ENCODE measurements at regions of chr2 and their contacts with region 1.

Region 1: GRCh38 chr2:156341452-156342253 is 9.1 kb upstream of the NR4A2 start:
- DNase-seq: peak; percentile 90 to 98 (median 94)
- ATAC-seq: peak; percentile 83
- H3K4me3 ChIP-seq: peak overlapping the region; percentile 88
- H3K27ac ChIP-seq: peak overlapping the region; percentile 98
- H3K4me1 ChIP-seq: peaks cover 6 to 30% of the 10 kb centered on the region in 2 experiments; a peak in 4 of 5 replicates
- H3K27me3 ChIP-seq: no peaks in the 10 kb centered on the region; a peak in 1 of 5 replicates
- CTCF ChIP-seq: no peak
- EP300 ChIP-seq: no peak; the same call in none of the 2 replicates
- POLR2A ChIP-seq: peak; percentile 90
- RAD21 ChIP-seq: no peak

Region 2: GRCh38 chr2:155332016-155332415 is 1009.6 kb before region 1 on chr2:
- CTCF ChIA-PET with region 1: no interaction called
- POLR2A ChIA-PET with region 1: no interaction called
- in situ Hi-C with region 1: no loop called
- intact Hi-C with region 1: no loop called
- DNase-seq: no peak
- ATAC-seq: no peak
- H3K4me3 ChIP-seq: no peak overlapping the region
- H3K27ac ChIP-seq: no peak overlapping the region
- H3K4me1 ChIP-seq: no peaks in the 10 kb centered on the region
- H3K27me3 ChIP-seq: no peaks in the 10 kb centered on the region
- CTCF ChIP-seq: no peak
- EP300 ChIP-seq: no peak
- POLR2A ChIP-seq: no peak
- RAD21 ChIP-seq: no peak

Region 3: DNA sequence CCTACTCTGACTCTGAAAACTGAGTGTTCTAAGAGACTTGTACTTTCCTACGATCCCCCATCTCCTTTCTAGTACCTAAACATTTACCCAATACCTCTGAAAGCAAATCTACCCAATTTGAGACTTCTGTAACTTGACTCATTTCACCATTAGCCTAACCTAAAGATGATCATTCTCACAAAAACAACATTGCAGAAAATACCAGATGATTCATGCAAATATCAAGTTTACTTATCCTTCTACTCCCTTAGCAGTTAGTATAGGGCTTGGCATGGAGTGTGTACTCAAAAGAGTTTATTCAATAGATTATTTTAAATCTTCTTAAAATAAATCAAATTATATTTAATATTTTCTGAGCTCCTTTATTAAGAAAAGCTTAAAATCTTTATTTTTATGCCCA is 98.8 kb before region 1 on chr2:
- CTCF ChIA-PET with region 1: no interaction called
- POLR2A ChIA-PET with region 1: no interaction called
- in situ Hi-C with region 1: no loop called
- intact Hi-C with region 1: no loop called
- DNase-seq: no peak
- ATAC-seq: no peak
- H3K4me3 ChIP-seq: no peak overlapping the region
- H3K27ac ChIP-seq: no peak overlapping the region
- H3K4me1 ChIP-seq: no peaks in the 10 kb centered on the region
- H3K27me3 ChIP-seq: no peaks in the 10 kb centered on the region
- CTCF ChIP-seq: no peak
- EP300 ChIP-seq: no peak
- POLR2A ChIP-seq: no peak
- RAD21 ChIP-seq: no peak

Region 4: DNA sequence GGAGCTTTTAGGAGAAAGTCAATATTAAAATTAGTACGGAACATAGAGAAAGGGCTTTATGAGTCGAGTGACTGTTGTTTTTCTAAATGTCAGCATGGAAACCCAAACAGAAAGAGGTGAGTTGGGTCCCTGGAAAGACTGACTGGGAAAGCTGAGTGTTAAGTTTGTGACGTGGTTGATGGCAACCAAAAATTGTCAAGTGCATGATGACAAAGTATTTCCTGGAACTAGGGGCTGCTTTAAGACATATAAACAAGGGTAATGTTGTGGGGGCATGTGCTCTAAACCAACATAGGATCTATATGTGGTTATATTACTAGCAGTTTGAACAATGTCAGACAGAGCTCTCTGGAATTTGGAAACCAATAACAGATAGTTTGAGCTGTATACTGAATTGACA is 43.6 kb after region 1 on chr2:
- CTCF ChIA-PET with region 1: no interaction called
- POLR2A ChIA-PET with region 1: no interaction called
- in situ Hi-C with region 1: no loop called
- intact Hi-C with region 1: loop called (anchors 2 kb)
- DNase-seq: peak in 2 of 4 experiments; percentile 32 to 66
- ATAC-seq: peak; percentile 42
- H3K4me3 ChIP-seq: no peak overlapping the region
- H3K27ac ChIP-seq: peak overlapping the region; percentile 40; the same call in 1 of the 3 replicates
- H3K4me1 ChIP-seq: peaks cover 0 to 14% of the 10 kb centered on the region in 2 experiments; a peak in 3 of 5 replicates
- H3K27me3 ChIP-seq: no peaks in the 10 kb centered on the region
- CTCF ChIP-seq: no peak
- EP300 ChIP-seq: 0 out of 2 replicates have a peak, but pooled peaks have one; percentile 27
- POLR2A ChIP-seq: no peak
- RAD21 ChIP-seq: peak in 1 of 2 experiments; percentile 13; a peak in 1 of 4 replicates

Region 5: GRCh38 chr2:156400706-156401678 is 59.3 kb after region 1 on chr2:
- CTCF ChIA-PET with region 1: no interaction called
- POLR2A ChIA-PET with region 1: interaction called, 6 read pairs
- in situ Hi-C with region 1: no loop called
- intact Hi-C with region 1: loop called (anchors 1 kb)
- DNase-seq: peak; percentile 73 to 84 (median 74)
- ATAC-seq: peak; percentile 84
- H3K4me3 ChIP-seq: peak overlapping the region; percentile 63
- H3K27ac ChIP-seq: peak overlapping the region; percentile 77
- H3K4me1 ChIP-seq: peaks cover 8 to 18% of the 10 kb centered on the region in 2 experiments; a peak in 4 of 5 replicates
- H3K27me3 ChIP-seq: no peaks in the 10 kb centered on the region
- CTCF ChIP-seq: peak in 1 of 3 experiments; percentile 15; a peak in 1 of 6 replicates
- EP300 ChIP-seq: peak; percentile 60; the same call in 1 of the 2 replicates
- POLR2A ChIP-seq: no peak
- RAD21 ChIP-seq: peak; percentile 32 to 42

Region 6: DNA sequence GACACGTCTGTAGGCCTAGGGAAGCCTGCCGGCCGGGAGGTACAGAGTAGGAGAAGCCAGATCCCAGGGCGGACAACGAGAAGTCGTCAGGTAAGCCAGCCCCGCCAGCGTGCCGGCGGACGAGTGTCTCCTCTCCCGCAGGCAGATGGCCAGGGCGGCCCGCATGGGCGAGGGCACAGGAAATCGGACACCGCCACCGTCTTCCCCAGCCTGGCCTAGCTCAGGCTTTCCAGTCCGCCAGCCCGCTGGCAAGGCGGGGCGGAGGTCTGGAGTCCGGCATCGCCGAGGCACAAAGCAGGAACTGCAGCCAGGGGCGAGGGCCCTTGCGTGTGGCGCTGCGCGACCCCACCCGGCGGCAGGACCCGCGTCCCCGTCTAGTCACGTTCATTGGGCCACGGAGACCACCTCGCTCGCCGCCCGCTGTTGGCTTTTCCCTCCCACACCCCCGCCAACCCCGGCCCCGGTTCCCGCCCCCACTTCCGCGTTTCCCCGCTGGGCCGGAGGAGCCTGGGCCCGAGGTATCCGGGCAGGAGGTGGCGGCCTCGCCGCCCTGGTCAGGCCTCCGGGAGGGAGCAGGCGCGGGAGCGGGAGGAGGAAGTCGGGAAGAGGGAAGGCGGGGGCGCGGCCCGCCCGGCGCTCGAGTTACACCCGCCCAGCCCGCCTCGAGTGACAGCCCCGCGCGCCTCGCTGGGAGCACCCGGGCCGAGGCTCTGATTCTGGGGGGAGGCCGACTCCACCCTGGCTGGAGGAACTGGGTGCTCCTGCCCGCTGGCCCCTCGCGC is 94.3 kb after region 1 on chr2 and contains the start of gene GPD2:
- CTCF ChIA-PET with region 1: no interaction called
- POLR2A ChIA-PET with region 1: interaction called, 4 read pairs
- in situ Hi-C with region 1: no loop called
- intact Hi-C with region 1: loop called (anchors 2 kb)
- DNase-seq: peak; percentile 78 to 81 (median 80)
- ATAC-seq: peak; percentile 89
- H3K4me3 ChIP-seq: peak within 1 kb of the TSS; percentile 49
- H3K27ac ChIP-seq: peak within 1 kb of the TSS; percentile 41
- H3K4me1 ChIP-seq: peaks cover 7 to 12% of the 10 kb centered on the region in 2 experiments
- H3K27me3 ChIP-seq: no peaks in the 10 kb centered on the region
- CTCF ChIP-seq: no peak
- EP300 ChIP-seq: no peak
- POLR2A ChIP-seq: peak; percentile 74
- RAD21 ChIP-seq: no peak
- polyA plus RNA-seq, gene GPD2: 5.2 to 6.0 TPM

Region 7: DNA sequence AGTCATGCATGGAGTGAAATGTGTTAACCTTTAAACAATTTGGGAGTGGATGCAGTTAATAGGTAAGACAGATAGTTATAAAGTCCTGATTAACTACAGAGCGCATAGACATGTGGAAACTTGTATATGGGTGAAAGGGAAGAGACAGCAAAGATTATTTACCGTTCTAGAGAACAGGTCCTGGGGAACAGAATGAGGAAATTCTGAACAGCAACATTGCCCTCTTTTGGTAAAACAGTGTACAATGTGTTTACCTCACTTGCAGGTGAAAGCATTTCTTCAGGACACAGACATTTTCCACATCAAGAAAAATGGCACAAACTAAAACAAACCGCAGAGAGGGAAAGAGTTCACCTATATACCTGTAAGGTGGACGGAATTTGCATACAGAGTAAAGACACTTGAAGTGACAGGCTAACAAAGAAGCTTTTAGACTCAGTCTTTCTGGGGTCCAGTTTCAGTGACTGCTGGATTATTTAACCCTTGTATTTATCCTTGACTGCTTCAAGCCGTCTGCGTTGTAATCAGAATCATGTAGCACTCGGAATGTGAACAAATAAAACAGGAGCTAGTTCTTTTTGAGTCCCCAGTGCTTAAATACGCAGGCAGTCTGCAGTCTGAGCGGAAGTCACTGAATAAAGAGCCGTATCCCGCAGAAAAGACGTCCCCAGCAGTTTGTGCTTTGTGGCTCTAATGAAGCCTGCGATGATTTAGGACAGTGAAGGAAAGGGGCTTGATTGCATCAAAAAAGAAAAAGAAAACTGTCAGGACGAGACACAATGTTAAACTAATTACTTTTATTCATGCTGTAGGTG is 551.0 kb after region 1 on chr2:
- CTCF ChIA-PET with region 1: no interaction called
- POLR2A ChIA-PET with region 1: no interaction called
- in situ Hi-C with region 1: no loop called
- intact Hi-C with region 1: loop called (anchors 1 kb)
- DNase-seq: peak in 2 of 4 experiments; percentile 35 to 53
- ATAC-seq: peak; percentile 95
- H3K4me3 ChIP-seq: peak overlapping the region; percentile 16
- H3K27ac ChIP-seq: no peak overlapping the region
- H3K4me1 ChIP-seq: no peaks in the 10 kb centered on the region
- H3K27me3 ChIP-seq: no peaks in the 10 kb centered on the region
- CTCF ChIP-seq: peak; percentile 29 to 64 (median 61); a peak in 5 of 6 replicates
- EP300 ChIP-seq: no peak
- POLR2A ChIP-seq: no peak
- RAD21 ChIP-seq: peak; percentile 83 to 87

Region 8: DNA sequence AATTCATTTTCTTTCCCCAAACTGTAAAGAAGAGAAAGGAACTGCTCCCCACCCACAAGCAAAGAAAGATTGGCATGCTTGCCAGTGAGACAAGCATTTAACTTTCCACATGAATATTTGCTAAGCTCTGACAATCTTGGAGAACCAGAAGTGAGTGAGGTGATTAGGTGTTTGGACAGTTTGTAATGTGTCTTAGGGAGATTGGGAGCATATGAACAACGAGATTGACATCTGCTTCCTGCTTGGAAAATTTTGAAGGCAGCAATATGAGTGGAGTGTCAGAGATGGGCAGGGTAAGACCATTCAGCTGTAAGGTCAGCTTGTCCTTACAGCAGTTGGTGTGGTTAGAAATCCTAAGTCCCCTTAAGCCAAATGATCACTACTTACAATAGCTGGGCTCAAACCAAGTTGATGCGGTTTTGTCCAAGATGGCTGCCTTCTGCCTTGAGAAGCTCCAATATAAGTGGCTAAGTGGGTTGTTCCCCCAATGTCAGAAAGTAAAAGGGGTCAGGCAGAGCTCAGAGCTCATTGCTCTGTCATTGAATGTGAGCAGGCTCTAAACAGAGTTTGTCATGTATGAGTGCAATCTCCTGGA is 879.8 kb after region 1 on chr2:
- CTCF ChIA-PET with region 1: no interaction called
- POLR2A ChIA-PET with region 1: no interaction called
- in situ Hi-C with region 1: loop called (anchors 25 kb)
- intact Hi-C with region 1: no loop called
- DNase-seq: peak; percentile 32 to 89 (median 58)
- ATAC-seq: peak; percentile 85
- H3K4me3 ChIP-seq: no peak overlapping the region
- H3K27ac ChIP-seq: peak overlapping the region; percentile 89
- H3K4me1 ChIP-seq: peaks cover 0 to 26% of the 10 kb centered on the region in 2 experiments; a peak in 2 of 5 replicates
- H3K27me3 ChIP-seq: no peaks in the 10 kb centered on the region
- CTCF ChIP-seq: no peak
- EP300 ChIP-seq: peak; percentile 98
- POLR2A ChIP-seq: peak; percentile 39; the same call in 1 of the 2 replicates
- RAD21 ChIP-seq: peak; percentile 13 to 28; a peak in 2 of 4 replicates

Region 9: DNA sequence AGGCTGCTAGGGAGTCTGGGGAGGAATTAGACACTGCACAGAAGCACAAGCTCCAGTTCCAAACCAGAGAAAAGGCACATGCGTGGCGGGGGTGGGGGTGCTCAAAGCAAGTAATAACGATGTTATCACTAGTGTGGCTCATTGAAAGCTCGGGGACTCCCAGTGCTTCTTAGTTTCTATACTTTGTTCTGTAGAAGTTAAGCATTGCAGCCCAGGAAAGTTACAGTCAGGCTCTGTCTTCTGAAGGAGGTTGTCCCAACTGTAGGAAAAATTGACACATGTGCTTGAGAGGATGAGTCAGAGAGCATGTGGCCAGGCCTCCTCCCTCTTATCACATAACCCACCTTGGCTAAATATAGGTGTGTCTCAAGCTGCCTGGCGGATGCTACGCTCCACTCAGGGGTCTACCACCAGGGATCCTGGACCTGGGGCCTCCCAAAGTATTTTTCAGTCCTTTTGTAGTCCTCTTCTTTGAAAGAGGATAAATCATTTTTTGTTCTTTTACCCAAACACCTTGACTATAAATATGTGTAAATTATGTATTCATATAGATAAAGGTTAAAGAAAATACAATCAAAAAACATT is 919.6 kb after region 1 on chr2:
- CTCF ChIA-PET with region 1: no interaction called
- POLR2A ChIA-PET with region 1: interaction called, 3 read pairs
- in situ Hi-C with region 1: no loop called
- intact Hi-C with region 1: loop called (anchors 1 kb)
- DNase-seq: peak; percentile 96 to 99 (median 98)
- ATAC-seq: peak; percentile 64
- H3K4me3 ChIP-seq: peak overlapping the region; percentile 53
- H3K27ac ChIP-seq: peak overlapping the region; percentile 94
- H3K4me1 ChIP-seq: peaks cover 7 to 37% of the 10 kb centered on the region in 2 experiments; a peak in 4 of 5 replicates
- H3K27me3 ChIP-seq: no peaks in the 10 kb centered on the region
- CTCF ChIP-seq: no peak
- EP300 ChIP-seq: peak; percentile 98
- POLR2A ChIP-seq: peak; percentile 90
- RAD21 ChIP-seq: peak; percentile 16 to 41; a peak in 3 of 4 replicates